IMR-90 (cell line): ENCODE measurements at regions of chr7 and their contacts with region 1.

Region 1: DNA sequence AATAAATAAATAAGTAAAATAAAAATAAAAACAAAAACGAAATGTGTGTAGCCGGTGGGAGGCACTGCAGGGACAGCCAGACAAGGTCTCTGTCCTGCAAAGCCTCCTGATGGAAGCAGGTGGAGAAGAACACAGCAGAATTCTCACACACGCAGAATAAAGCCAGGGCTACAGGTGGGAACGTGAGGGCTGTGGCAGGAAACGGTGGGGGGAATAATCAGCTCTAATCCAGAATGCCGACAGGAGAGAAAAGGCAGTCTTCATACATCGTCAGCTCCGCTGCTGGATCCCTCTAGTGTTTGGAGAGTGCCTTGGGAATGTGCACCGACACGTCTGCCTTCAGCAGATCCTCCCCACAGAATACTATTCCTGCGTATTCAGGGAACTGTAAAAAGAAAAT is 6.8 kb upstream of the SNX8 start:
- DNase-seq: peak; percentile 22
- ATAC-seq: no peak
- H3K4me3 ChIP-seq: no peak overlapping the region
- H3K27ac ChIP-seq: no peak overlapping the region
- H3K4me1 ChIP-seq: no peaks in the 10 kb centered on the region
- H3K27me3 ChIP-seq: peaks cover 2% of the 10 kb centered on the region; the same call in 1 of the 2 replicates
- CTCF ChIP-seq: no peak
- POLR2A ChIP-seq: no peak
- RAD21 ChIP-seq: no peak

Region 2: GRCh38 chr7:1607696-1608095 is 713.3 kb before region 1 on chr7:
- CTCF ChIA-PET with region 1: no interaction called
- POLR2A ChIA-PET with region 1: no interaction called
- dilution Hi-C with region 1: no loop called
- in situ Hi-C with region 1: loop called (anchors 10 kb)
- intact Hi-C with region 1: no loop called
- DNase-seq: no peak
- ATAC-seq: no peak
- H3K4me3 ChIP-seq: no peak overlapping the region
- H3K27ac ChIP-seq: no peak overlapping the region
- H3K4me1 ChIP-seq: peaks cover 2% of the 10 kb centered on the region
- H3K27me3 ChIP-seq: peaks cover 45% of the 10 kb centered on the region
- CTCF ChIP-seq: no peak
- POLR2A ChIP-seq: no peak
- RAD21 ChIP-seq: no peak